Naive thymus-derived CD4-positive, alpha-beta T cell (primary cell): ENCODE measurements at regions of chr1 and their contacts with region 1.

Region 1: DNA sequence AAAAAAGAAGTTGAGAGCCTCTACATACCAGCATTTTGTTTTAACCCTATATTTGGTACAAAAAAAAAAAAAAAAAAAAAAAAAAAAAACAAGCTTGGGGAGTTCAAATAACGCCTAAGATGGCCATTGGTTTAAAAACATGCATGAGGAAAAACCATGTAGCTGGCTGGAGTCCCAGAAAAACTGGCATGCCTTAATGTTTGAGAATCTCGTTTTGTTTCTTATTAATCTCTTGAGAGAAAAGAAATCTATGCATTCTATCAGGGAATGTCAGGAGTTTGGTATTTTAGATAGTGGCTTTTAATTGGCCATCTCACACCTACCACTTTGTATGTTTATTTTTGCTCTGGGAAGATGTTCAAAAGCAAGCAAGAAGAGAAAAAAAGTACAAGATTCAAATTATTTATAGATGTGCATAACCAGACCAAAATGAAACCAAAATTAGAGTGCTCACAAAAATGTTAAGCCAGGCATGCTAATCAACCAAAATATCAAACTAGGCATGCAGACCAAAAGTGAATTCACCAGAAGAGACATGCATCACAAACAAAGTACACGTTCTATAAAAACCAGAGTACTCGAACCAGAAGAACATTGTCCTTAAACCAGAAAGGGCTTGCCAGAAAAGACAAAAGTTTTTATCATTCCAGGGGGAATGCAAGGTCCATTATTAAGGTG is 156.6 kb downstream of the AK5 start:
- DNase-seq: no peak
- ATAC-seq: no peak
- H3K4me3 ChIP-seq: peak overlapping the region; percentile 20
- H3K4me3 Mint-ChIP-seq: peak overlapping the region; percentile 39 to 80 (median 74)
- H3K27ac ChIP-seq: no peak overlapping the region
- H3K27ac Mint-ChIP-seq: peak overlapping the region in 8 of 9 donors; percentile 49 to 90 (median 83)
- H3K4me1 ChIP-seq: peaks cover 0 to 34% of the 10 kb centered on the region in 2 donors
- H3K4me1 Mint-ChIP-seq: peaks cover 25 to 72% (median 54%) of the 10 kb centered on the region in 7 donors
- H3K27me3 ChIP-seq: no peaks in the 10 kb centered on the region
- H3K27me3 Mint-ChIP-seq: no peaks in the 10 kb centered on the region

Region 2: DNA sequence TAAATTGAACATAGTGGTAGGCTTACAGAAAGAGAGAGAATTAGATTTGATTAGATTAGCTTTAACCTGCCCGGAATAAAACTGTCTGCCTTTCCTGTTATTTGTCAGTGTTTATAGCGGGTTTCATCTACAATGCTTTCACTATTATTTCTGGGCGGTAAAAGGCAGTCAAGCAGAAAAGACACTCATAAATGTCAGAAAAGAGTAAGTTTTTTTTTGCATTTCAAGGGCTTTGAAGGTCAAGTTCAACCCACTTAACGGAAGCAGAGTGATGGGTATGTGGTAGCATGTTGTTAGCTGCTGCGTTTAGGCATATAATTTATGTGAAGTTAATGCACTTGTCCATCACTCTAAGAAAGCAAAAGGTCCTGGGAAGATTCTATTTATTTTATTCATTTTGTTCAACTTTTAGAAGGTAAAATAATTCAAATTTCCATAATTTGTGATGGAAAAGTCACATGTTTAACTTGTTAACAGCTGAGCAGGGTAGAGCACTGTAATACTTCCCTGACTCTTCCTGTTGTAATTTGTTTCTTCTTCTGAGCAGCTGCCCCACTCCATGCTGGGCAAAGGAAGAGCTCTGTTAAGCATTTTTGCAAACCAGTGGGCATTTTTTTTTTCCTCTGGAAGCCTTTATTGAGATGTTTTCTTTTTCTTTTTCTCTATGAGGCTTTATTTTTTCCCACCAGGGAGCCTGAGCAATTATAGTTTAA is 1143.7 kb before region 1 on chr1:
- CTCF ChIA-PET with region 1: no interaction called
- POLR2A ChIA-PET with region 1: no interaction called
- intact Hi-C with region 1: loop called in 1 of 2 experiments (anchors 10 kb)
- DNase-seq: peak in 5 of 9 donors; percentile 21 to 59 (median 49)
- ATAC-seq: peak; percentile 62
- H3K4me3 ChIP-seq: peak overlapping the region; percentile 7
- H3K4me3 Mint-ChIP-seq: peak overlapping the region; percentile 27 to 83 (median 69)
- H3K27ac ChIP-seq: peak overlapping the region; percentile 41
- H3K27ac Mint-ChIP-seq: peak overlapping the region; percentile 63 to 88 (median 81)
- H3K4me1 ChIP-seq: peaks cover 41 to 63% of the 10 kb centered on the region in 2 donors
- H3K4me1 Mint-ChIP-seq: peaks cover 21 to 93% (median 77%) of the 10 kb centered on the region in 7 donors
- H3K27me3 ChIP-seq: no peaks in the 10 kb centered on the region
- H3K27me3 Mint-ChIP-seq: peaks cover 0 to 2% (median 0%) of the 10 kb centered on the region in 5 donors

Region 3: DNA sequence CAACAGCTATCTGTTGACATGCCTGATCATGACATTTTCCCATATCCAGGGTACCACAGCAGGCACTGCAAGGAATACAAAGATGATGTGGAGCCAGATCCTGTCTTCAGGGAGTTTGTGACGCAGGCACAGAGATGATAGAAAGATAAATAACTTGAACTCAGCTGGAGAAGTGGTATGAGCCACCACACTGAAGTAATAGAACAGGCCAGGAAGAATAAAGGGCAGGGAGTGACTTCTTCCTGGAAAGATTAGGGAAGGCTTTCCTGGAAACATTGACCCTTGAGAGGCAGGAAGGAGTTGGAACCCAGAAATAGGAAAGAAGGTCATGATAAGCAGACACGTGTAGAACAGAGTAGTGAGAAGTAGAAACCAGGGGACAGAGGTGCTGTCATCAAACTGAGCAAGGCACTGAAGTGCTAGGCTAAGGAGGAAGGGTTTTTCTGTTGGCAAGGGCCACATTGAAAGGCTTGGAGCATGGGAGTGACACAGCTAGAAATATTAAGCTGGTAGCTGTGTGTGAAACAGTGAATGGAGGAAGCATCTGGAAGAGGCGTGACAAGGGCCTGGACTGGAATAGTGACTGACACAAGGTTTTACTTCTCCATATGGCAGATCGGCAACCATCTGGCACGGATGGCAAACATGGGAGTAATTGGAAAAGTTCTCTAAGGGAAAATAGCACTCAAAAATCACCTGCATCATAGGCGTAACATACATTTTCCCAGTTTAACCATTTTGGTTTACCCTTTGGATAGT is 88.2 kb before region 1 on chr1:
- CTCF ChIA-PET with region 1: no interaction called
- POLR2A ChIA-PET with region 1: no interaction called
- intact Hi-C with region 1: no loop called
- DNase-seq: no peak
- ATAC-seq: peak; percentile 42
- H3K4me3 ChIP-seq: no peak overlapping the region
- H3K4me3 Mint-ChIP-seq: no peak overlapping the region
- H3K27ac ChIP-seq: no peak overlapping the region
- H3K27ac Mint-ChIP-seq: peak overlapping the region in 4 of 9 donors; percentile 2 to 64 (median 13)
- H3K4me1 ChIP-seq: peaks cover 0 to 4% of the 10 kb centered on the region in 2 donors
- H3K4me1 Mint-ChIP-seq: peaks cover 9 to 64% (median 34%) of the 10 kb centered on the region in 7 donors
- H3K27me3 ChIP-seq: no peaks in the 10 kb centered on the region
- H3K27me3 Mint-ChIP-seq: no peaks in the 10 kb centered on the region

Region 4: DNA sequence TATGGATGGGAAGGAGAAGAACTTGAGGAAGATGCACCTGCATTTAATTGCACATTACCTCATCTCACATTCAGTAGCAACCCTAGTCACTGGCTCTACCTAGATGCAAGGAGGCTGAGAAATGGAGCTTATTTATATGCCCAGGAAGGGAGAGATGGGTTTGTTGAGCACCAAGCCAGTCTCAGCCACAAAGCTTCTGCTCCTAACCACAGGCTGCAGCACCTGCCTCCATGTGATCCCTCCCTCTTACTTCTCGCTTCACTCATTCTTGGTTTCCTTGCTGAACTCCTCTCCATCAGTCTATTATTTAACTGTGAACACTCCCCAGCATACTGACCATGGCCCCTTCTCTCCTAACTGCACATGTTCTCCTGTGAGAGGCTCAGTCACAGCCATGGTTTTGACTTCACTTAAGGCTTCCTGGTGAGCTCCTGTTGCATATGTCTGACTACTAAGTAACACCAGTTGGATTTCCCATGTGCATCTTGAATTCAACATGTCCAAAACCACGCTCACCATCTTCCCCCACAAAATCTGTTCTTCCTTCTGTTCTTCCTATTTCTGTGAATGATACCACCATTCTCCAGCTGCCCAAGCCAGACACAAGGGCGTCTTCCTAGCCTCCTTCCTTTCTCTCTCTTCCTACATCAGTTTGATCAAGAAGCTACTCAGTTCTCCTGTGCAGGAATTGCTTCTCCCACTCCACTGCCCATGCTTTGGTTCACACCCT is 16.7 kb before region 1 on chr1:
- CTCF ChIA-PET with region 1: interaction called, 7 read pairs
- POLR2A ChIA-PET with region 1: interaction called, 18 read pairs
- intact Hi-C with region 1: no loop called
- DNase-seq: peak in 7 of 9 donors; percentile 14 to 61 (median 44)
- ATAC-seq: peak; percentile 81
- H3K4me3 ChIP-seq: peak overlapping the region; percentile 32
- H3K4me3 Mint-ChIP-seq: peak overlapping the region; percentile 28 to 80 (median 65)
- H3K27ac ChIP-seq: no peak overlapping the region
- H3K27ac Mint-ChIP-seq: peak overlapping the region in 8 of 9 donors; percentile 14 to 94 (median 80)
- H3K4me1 ChIP-seq: peaks cover 18 to 25% of the 10 kb centered on the region in 2 donors
- H3K4me1 Mint-ChIP-seq: peaks cover 18 to 82% (median 73%) of the 10 kb centered on the region in 7 donors
- H3K27me3 ChIP-seq: no peaks in the 10 kb centered on the region
- H3K27me3 Mint-ChIP-seq: peaks cover 0 to 3% (median 0%) of the 10 kb centered on the region in 5 donors

Region 5: DNA sequence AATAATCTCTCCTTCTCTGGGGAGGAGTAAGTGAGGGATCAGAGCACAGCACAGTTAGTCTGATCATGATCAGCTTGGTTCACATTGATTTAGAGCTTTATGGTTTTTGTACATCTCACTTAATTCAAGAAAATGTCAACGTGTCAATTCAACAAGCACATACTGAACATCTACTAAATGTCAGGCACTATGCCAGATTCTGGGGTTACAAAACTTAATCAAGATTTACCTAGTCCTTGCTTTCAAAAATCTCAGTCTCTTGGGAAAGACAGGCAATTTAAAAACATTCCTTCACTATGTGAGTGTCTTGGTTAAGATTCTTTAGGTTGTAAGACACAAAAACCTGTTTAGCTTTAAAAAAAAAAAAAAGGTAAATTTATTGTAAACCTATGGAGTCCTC is 24.8 kb after region 1 on chr1:
- CTCF ChIA-PET with region 1: interaction called, 3 read pairs
- POLR2A ChIA-PET with region 1: interaction called, 3 read pairs
- intact Hi-C with region 1: loop called in 1 of 2 experiments (anchors 2 kb)
- DNase-seq: no peak
- ATAC-seq: no peak
- H3K4me3 ChIP-seq: no peak overlapping the region
- H3K4me3 Mint-ChIP-seq: no peak overlapping the region
- H3K27ac ChIP-seq: no peak overlapping the region
- H3K27ac Mint-ChIP-seq: peak overlapping the region in 2 of 9 donors; percentile 55 to 61
- H3K4me1 ChIP-seq: no peaks in the 10 kb centered on the region
- H3K4me1 Mint-ChIP-seq: peaks cover 0 to 51% (median 35%) of the 10 kb centered on the region in 7 donors
- H3K27me3 ChIP-seq: no peaks in the 10 kb centered on the region
- H3K27me3 Mint-ChIP-seq: no peaks in the 10 kb centered on the region